PC-9 (cell line): ENCODE measurements at regions of chr4 and their contacts with region 1.

Region 1: GRCh38 chr4:103008875-103009729 is 10.4 kb downstream of the SLC9B1 start:
- DNase-seq: peak in 1 of 2 experiments; percentile 52
- H3K4me3 ChIP-seq: no peak overlapping the region
- H3K27ac ChIP-seq: no peak overlapping the region
- H3K4me1 ChIP-seq: peaks cover 10% of the 10 kb centered on the region
- H3K27me3 ChIP-seq: no peaks in the 10 kb centered on the region
- CTCF ChIP-seq: peak; percentile 64

Region 2: GRCh38 chr4:102713096-102713495 is 296.0 kb before region 1 on chr4:
- CTCF ChIA-PET with region 1: no interaction called
- POLR2A ChIA-PET with region 1: no interaction called
- intact Hi-C with region 1: no loop called
- DNase-seq: no peak
- H3K4me3 ChIP-seq: no peak overlapping the region
- H3K27ac ChIP-seq: no peak overlapping the region
- H3K4me1 ChIP-seq: 0 out of 2 replicates have a peak, but pooled peaks cover 4% of the 10 kb centered on the region
- H3K27me3 ChIP-seq: no peaks in the 10 kb centered on the region
- CTCF ChIP-seq: no peak

Region 3: DNA sequence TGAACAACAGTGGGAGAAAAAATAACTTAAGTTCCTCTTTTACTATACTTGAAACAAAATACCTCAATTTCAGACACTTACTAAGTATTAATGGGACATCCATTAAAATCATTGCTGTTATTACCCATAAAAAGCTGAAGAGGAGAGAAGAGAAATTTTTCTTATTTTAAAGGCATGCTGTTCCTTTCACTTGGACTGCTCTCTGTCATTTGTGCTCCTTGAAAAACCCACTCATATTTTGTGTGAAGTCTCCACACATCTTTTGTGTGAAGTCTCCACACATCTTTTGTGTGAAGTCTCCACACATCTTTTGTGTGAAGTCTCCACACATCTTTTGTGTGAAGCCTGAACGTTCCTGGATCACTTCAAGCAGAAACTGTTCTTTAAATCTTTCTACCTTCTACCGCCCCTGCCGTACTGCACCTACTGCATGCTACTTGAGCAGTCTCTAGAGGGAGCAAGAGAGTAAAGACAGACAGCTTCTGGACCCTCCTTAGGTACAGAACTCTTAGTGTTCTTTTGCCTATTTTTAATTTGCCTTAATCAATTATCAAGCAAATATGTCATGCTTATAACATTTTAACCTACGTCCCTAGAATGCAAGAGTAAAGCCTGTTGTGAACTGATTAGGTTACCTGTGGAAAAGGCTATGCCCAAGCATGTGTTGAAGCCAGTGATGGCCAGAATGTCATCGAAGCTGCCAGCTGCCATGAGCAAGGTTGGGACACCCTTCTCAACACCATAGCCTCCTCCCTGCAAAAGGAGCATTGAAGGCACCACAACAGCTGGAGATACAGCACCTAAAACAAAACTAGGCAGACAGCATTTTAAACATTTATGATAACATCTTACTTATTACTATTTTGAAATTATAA is 37.6 kb after region 1 on chr4:
- CTCF ChIA-PET with region 1: interaction called, 12 read pairs
- POLR2A ChIA-PET with region 1: no interaction called
- intact Hi-C with region 1: no loop called
- DNase-seq: peak in 1 of 2 experiments; percentile 3
- H3K4me3 ChIP-seq: no peak overlapping the region
- H3K27ac ChIP-seq: no peak overlapping the region
- H3K4me1 ChIP-seq: no peaks in the 10 kb centered on the region
- H3K27me3 ChIP-seq: no peaks in the 10 kb centered on the region
- CTCF ChIP-seq: peak; percentile 61